ENCODE measurements at regions of chr2 and their contacts with region 1.

Region 1: DNA sequence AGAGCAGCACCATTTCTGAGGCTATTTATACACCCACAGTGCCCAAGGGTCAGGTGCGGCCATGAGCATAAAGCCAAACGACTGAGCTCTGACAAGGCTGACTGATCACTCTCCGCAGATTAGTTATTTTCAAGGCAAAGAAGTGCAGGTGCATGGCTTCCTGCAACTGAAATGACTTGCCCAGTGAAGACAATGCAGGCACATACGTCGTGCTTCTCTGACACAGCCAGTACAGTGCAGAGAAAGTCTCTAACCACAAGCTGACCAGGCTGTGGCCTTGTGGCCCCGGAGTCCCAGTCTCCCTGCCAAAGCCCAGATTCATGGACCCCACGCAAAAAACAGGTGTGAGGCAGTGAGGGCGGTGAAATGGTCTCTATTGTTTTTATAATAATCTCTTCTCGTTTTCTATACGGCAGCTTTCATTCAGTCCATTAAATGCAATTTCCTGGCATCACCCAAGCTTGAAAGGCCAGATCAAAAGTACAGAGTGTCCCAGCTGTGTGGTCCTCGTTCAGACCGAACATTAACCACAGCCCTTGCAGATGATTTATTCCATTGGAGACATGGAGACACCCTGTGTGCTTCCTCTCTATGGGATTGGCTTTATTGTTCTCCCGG is 447.0 kb upstream of the ID2 start:
- DNase-seq: peak; percentile 97
- H3K4me3 ChIP-seq: peak overlapping the region; percentile 41
- H3K27ac ChIP-seq: peak overlapping the region; percentile 97
- H3K4me1 ChIP-seq: peaks cover 99% of the 10 kb centered on the region
- CTCF ChIP-seq: no peak

Region 2: DNA sequence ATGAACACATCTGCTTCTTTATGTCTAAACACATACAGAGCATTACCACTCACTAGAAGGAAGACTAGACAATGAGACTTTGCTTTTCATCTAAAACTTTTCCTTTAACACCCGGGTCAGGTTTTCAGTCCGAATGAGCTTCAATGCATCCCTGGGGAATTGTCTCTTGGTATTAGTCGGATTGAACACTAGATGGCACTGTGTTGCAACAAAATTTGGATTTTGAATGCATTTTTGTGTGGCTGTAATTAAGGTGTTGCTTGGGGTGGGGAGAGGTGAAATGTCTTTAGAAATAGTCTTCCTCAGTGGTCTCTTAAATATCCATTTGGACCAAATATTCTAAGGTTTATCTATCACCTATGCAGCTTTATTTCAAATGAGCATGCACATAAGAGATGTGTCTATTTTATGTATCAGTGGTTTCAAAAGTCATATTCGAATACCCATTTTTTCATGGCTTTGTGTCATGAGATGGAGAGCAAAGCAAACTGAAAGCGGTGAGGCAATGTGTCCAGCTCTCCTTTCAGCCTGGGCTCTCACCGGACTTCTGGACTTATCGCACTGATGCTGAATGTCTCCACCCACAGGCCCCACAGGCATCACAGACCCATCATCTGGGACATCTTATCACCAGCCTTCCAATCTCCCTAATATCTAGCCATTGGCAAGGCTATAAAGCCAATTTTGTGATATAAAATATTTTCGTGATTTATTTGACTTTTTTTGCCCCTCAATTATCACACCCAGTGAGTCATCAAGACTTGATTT is 807.4 kb before region 1 on chr2:
- CTCF ChIA-PET with region 1: no interaction called
- POLR2A ChIA-PET with region 1: interaction called, 3 read pairs
- intact Hi-C with region 1: loop called (anchors 5 kb)
- DNase-seq: peak; percentile 92
- H3K4me3 ChIP-seq: no peak overlapping the region
- H3K27ac ChIP-seq: no peak overlapping the region
- H3K4me1 ChIP-seq: peaks cover 48% of the 10 kb centered on the region
- CTCF ChIP-seq: peak; percentile 91

Region 3: DNA sequence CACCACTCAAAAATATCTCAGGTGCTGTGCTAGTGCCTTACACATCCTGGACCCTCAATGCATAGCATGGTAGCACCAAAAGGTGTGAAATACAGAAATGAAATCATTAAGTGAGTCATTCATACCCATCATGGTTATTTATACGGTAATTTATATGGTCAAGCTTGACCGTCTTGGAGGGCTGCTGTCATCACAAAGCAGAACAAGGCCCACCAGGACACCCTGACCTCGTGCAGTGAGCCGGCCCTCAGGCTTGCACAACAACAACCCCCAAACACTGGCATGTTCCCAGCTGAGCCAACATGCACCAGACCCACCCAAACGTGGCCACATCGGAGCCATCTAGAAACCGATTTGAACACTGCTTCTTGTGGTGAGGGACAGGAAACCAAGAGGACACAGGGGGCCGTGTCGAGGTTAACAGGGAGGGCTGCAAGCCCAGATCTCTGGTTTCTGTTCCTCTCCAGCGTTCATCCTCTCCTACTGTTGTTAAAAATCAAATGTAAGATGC is 68.5 kb after region 1 on chr2:
- CTCF ChIA-PET with region 1: no interaction called
- POLR2A ChIA-PET with region 1: interaction called, 3 read pairs
- intact Hi-C with region 1: loop called (anchors 1 kb)
- DNase-seq: peak; percentile 96
- H3K4me3 ChIP-seq: peak overlapping the region; percentile 36
- H3K27ac ChIP-seq: peak overlapping the region; percentile 76
- H3K4me1 ChIP-seq: peaks cover 71% of the 10 kb centered on the region
- CTCF ChIP-seq: peak; percentile 70

Region 4: DNA sequence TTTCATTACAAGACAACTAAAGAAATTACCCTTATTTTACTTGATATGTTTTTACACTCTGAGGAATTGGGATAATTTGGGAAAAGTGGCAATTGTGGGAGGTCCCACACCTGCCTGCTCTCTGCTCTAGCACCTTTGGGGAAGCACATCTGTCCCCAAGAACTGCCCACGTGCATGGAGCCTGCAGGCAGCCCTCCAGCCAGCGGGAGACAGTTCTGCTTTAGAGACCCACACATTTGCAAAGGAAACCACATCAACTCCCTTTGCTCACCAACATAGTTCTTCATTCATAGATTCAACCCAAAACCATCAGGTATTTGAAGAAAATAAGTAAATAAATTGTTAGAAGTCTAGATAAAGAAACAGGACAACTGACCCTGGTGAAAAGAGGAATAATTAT is 207.1 kb after region 1 on chr2:
- CTCF ChIA-PET with region 1: no interaction called
- POLR2A ChIA-PET with region 1: interaction called, 3 read pairs
- intact Hi-C with region 1: loop called (anchors 5 kb)
- DNase-seq: peak; percentile 69
- H3K4me3 ChIP-seq: peak overlapping the region; percentile 11
- H3K27ac ChIP-seq: peak overlapping the region; percentile 46
- H3K4me1 ChIP-seq: peaks cover 60% of the 10 kb centered on the region
- CTCF ChIP-seq: no peak

Region 5: DNA sequence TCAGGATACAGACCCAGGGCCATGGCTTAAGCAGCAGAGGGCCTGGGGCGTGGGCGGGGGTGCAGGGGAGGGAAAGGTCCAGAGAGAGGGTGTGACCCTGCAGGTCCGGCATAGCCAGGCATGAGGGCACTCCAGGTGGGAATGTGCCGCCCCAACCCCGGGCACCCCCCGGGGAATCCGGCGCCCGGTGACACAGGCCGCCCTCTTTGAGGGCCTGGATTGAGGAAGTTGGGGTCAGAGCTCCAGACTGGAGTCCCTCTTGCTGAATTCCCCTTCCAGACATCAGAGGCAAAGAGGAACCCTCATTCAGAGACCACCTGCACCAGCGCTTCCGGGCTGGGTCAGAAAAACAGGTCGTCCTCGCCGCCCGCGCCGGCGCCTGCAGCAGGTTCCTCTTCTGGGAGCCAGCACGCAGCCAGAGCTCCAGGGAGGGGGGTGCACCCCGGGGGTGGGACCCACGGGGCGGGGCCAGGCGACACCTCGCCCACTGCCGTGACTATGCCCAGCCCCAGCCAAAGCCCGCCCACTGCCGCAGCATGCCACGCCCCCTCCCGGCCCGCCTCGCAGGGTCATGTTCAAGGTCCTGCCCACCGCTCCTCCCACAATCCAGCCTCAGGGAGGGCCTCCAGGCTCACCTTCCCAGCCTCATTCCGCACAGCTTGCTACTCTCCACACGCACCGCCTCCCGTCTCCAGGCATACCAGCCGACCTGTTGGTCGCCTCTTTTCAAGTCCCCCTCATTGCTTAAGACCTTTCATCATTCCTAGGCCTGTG is 348.7 kb after region 1 on chr2:
- CTCF ChIA-PET with region 1: no interaction called
- POLR2A ChIA-PET with region 1: interaction called, 4 read pairs
- intact Hi-C with region 1: loop called (anchors 2 kb)
- DNase-seq: peak; percentile 99
- H3K4me3 ChIP-seq: peak overlapping the region; percentile 61
- H3K27ac ChIP-seq: peak overlapping the region; percentile 98
- H3K4me1 ChIP-seq: peaks cover 97% of the 10 kb centered on the region
- CTCF ChIP-seq: no peak

Measured in OCI-LY7 (cell line).